ENCODE measurements at regions of chr19 and their contacts with region 1.

Region 1: DNA sequence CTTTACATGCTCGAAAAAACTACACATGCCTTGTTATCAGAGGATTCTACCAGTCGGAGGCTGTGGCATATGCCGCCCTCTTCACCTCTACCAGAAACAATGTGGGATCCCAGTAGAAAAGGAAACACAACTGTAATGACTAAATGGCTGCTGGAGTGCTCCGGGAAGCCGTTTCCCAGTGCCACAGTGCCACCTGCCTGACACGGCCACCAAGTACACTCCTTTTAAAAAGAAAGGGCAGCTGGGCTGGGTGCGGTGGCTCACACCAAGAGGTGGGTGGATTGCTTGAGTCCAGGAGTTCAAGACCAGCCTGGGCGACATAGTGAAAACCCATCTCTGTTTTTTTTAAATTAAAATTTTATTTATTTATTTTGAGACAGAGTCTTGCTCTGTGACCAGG is 67.3 kb downstream of the TRPM4 start:
- DNase-seq: no peak
- H3K4me3 ChIP-seq: no peak overlapping the region
- H3K27ac ChIP-seq: no peak overlapping the region
- H3K4me1 ChIP-seq: no peaks in the 10 kb centered on the region
- H3K27me3 ChIP-seq: no peaks in the 10 kb centered on the region
- CTCF ChIP-seq: no peak
- POLR2A ChIP-seq: no peak

Region 2: GRCh38 chr19:49430678-49431329 is 205.9 kb after region 1 on chr19:
- intact Hi-C with region 1: loop called (anchors 10 kb)
- DNase-seq: no peak
- H3K4me3 ChIP-seq: no peak overlapping the region
- H3K27ac ChIP-seq: no peak overlapping the region
- H3K4me1 ChIP-seq: no peaks in the 10 kb centered on the region
- H3K27me3 ChIP-seq: peaks cover 26 to 60% of the 10 kb centered on the region in 2 donors
- CTCF ChIP-seq: no peak
- POLR2A ChIP-seq: no peak

Measured in uterus (tissue), 4 donors.